Endothelial cell of umbilical vein (primary cell): ENCODE measurements at regions of chr6 and their contacts with region 1.

Region 1: DNA sequence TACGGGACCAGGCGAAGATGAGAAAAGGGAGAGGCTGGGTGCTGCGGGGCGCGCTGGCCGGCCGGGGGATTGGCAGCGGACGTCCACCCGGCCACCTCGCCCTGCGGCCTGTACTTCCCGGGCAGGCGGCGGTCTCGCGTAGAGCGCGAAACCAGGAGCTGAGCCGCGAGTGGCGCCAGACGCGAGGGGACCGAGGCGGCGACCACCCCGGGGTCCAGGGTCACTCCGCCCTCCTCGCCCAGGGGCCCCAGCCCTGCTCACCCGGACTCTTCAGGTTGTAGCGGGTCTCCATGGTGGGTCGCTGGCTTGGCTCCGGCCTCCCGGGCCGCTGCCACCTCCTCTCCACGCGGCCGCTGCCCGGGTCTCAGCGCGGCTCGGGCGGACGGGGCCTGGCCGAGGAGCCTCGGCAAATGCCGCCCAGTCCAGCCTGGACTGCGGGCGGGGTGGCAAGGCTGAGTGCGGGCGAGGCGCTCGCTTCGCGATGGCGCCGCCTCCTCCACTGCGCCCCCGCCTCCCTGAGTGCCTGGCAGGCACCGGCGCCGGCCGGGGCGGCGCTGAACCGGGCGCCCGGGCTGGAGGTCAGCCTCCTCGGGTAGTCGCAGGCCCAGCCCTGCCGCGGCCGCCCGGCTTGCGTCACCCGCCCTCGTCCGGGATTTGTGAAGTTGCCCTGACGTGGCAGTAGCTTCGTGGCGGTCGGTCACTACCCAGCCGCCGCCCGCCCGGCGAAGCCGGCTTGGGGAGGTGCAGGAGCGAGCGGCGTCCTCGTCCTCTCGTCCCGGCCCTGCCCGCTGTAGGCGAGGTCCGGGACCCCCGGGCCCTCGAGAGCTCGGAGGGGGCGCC is at the start of gene UBE2J1:
- DNase-seq: peak; percentile 94
- H3K4me3 ChIP-seq: peak within 1 kb of the TSS; percentile 93 to 100 (median 100)
- H3K27ac ChIP-seq: peak within 1 kb of the TSS; percentile 96
- H3K4me1 ChIP-seq: peaks cover 38% of the 10 kb centered on the region
- H3K27me3 ChIP-seq: no peaks in the 10 kb centered on the region
- CTCF ChIP-seq: no peak
- POLR2A ChIP-seq: peak; percentile 87
- total RNA-seq, gene UBE2J1: 84.9 and 96.6 TPM in 2 replicates

Region 2: GRCh38 chr6:88963139-88964090 is 389.1 kb before region 1 on chr6 and contains the start of gene RNGTT:
- CTCF ChIA-PET with region 1: no interaction called
- POLR2A ChIA-PET with region 1: interaction called, 3 read pairs
- dilution Hi-C with region 1: no loop called
- intact Hi-C with region 1: loop called (anchors 5 kb)
- DNase-seq: peak; percentile 98
- H3K4me3 ChIP-seq: peak within 1 kb of the TSS; percentile 93 to 99 (median 96)
- H3K27ac ChIP-seq: peak within 1 kb of the TSS; percentile 71
- H3K4me1 ChIP-seq: peaks cover 12% of the 10 kb centered on the region
- H3K27me3 ChIP-seq: no peaks in the 10 kb centered on the region
- CTCF ChIP-seq: no peak
- POLR2A ChIP-seq: peak; percentile 50
- total RNA-seq, gene RNGTT: 13.1 and 13.5 TPM in 2 replicates

Region 3: GRCh38 chr6:89145787-89146646 is 206.5 kb before region 1 on chr6 and contains the start of gene PM20D2:
- CTCF ChIA-PET with region 1: no interaction called
- POLR2A ChIA-PET with region 1: interaction called, 4 read pairs
- dilution Hi-C with region 1: no loop called
- intact Hi-C with region 1: loop called (anchors 5 kb)
- DNase-seq: peak; percentile 63
- H3K4me3 ChIP-seq: peak within 1 kb of the TSS; percentile 52 to 83 (median 79)
- H3K27ac ChIP-seq: peak within 1 kb of the TSS; percentile 72
- H3K4me1 ChIP-seq: peaks cover 10% of the 10 kb centered on the region
- H3K27me3 ChIP-seq: peaks cover 5 to 7% of the 10 kb centered on the region in 2 experiments
- CTCF ChIP-seq: no peak
- POLR2A ChIP-seq: peak; percentile 44
- total RNA-seq, gene PM20D2: 8.3 and 10.9 TPM in 2 replicates

Region 4: DNA sequence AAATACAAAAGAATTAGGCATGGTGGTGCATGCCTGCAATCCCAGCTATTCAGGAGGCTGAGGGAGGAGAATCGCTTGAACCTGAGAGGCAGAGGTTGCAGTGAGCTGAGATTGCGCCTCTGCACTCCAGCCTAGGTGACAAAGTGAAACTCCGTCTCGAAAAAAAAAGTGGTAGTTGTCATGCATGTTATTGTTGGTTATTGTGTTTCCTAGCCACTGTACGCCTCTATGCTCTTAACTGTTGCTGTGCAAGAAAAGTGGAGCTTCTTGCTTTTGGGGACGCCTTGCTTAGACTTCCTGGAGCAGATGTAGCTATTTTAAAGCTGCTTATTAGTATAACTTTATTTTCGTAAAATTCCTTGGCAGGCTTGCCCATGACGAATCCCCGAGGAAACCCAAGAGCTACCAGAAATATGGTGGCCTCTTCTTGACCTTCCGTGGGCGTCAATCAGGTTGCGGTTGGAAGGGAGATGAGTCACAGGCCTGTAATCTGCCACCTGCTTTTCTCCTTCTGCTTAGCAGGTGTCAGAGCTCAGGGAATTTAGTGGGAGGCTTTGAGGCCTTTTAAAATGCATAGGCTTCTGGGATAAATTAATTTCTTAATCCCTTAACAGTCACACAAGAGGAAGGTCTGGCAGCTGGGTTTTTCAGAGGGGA is 54.7 kb before region 1 on chr6:
- CTCF ChIA-PET with region 1: interaction called, 15 read pairs
- POLR2A ChIA-PET with region 1: interaction called, 16 read pairs
- dilution Hi-C with region 1: no loop called
- intact Hi-C with region 1: loop called (anchors 1 kb)
- DNase-seq: peak; percentile 97
- H3K4me3 ChIP-seq: peak overlapping the region in 1 of 3 experiments; percentile 47
- H3K27ac ChIP-seq: peak overlapping the region; percentile 84
- H3K4me1 ChIP-seq: peaks cover 28% of the 10 kb centered on the region
- H3K27me3 ChIP-seq: no peaks in the 10 kb centered on the region
- CTCF ChIP-seq: no peak
- POLR2A ChIP-seq: no peak

Region 5: DNA sequence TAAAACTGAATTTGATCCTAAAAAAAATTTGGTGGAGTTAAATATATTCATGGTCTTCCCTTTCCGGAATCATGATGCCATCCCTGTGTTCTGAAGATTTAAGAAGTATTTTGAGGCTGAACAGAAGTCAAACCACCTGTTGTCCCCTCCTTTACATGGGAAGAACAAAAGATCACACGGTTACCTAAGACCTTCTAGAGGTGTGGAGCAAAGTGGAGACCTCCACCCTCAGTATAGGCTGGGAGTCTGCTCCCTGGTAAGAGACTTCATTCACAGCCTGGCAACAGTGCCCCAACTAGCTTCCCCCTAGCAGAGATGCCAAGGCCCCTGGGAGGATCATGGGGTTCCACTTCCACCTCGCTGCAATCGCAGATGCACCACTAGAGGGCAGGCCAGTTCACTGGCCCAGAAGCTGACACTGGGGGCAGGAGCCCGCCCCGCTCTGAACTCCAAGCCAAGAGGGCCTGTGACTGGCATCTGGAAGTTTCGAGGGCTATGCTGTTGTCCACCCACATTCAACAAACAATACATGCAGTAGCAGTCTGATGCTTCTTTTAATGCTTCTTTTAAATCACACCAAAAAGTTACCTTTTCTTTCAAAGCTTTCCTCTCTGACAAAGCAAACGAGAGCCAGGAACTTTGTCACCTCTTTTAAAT is 19.5 kb after region 1 on chr6:
- CTCF ChIA-PET with region 1: interaction called, 56 read pairs
- POLR2A ChIA-PET with region 1: no interaction called
- dilution Hi-C with region 1: no loop called
- intact Hi-C with region 1: no loop called
- DNase-seq: peak; percentile 61
- H3K4me3 ChIP-seq: no peak overlapping the region
- H3K27ac ChIP-seq: no peak overlapping the region
- H3K4me1 ChIP-seq: peaks cover 3% of the 10 kb centered on the region
- H3K27me3 ChIP-seq: no peaks in the 10 kb centered on the region
- CTCF ChIP-seq: peak; percentile 96 to 98
- POLR2A ChIP-seq: no peak